ENCODE measurements at regions of chr12 and their contacts with region 1.

Region 1: DNA sequence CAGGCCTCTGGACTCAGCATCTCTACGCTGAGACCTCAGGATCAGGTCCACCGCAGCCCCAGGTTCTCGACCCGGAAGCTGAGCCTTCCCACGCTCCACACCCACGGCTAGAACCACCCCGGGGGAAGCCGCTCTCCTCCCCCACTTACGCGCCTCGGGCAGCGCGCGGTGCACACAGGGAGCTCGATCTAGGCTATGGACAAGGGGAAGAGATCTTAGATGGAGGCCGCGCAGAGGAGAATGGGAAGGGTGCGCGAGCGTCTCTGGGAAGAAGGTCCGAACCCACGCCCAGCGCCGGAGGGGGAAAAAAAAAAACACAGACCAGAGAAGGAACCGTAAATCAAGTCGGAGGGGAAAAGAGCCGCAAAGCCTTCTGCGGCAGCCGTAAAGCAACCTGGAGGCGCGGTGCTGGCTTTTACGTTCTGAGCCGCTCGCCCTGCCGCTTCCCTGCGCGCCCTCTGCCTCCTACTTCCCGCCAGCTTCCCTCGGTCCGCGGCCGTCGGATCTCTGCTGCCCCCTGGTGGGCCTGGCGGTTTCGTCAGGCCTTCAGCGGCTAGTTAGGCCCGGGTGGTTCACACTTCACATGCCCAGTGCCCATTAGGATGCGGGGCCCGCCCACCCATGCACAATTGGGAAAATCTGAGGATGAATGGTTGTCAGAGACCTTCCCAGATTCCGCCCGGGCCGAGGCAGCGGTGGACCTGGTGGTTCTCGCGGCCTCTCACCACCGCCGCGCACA is at the start of gene RAD52:
- DNase-seq: peak; percentile 99 to 100
- ATAC-seq: peak; percentile 99
- H3K4me3 ChIP-seq: peak within 1 kb of the TSS; percentile 66 to 77
- H3K27ac ChIP-seq: peak within 1 kb of the TSS; percentile 47 to 75
- H3K4me1 ChIP-seq: no peaks in the 10 kb centered on the region
- H3K27me3 ChIP-seq: no peaks in the 10 kb centered on the region
- total RNA-seq, gene RAD52: 13.2 to 25.7 TPM

Region 2: GRCh38 chr12:751192-751998 is 198.2 kb before region 1 on chr12:
- intact Hi-C with region 1: loop called in 1 of 2 experiments (anchors 5 kb)
- DNase-seq: peak; percentile 96 to 98
- ATAC-seq: peak; percentile 84
- H3K4me3 ChIP-seq: peak overlapping the region; percentile 13 to 30
- H3K27ac ChIP-seq: peak overlapping the region; percentile 9 to 49
- H3K4me1 ChIP-seq: no peaks in the 10 kb centered on the region
- H3K27me3 ChIP-seq: no peaks in the 10 kb centered on the region

Region 3: GRCh38 chr12:823028-823698 is 126.5 kb before region 1 on chr12:
- intact Hi-C with region 1: loop called in 1 of 2 experiments (anchors 5 kb)
- DNase-seq: no peak
- ATAC-seq: no peak
- H3K4me3 ChIP-seq: no peak overlapping the region
- H3K27ac ChIP-seq: no peak overlapping the region
- H3K4me1 ChIP-seq: peaks cover 0 to 3% of the 10 kb centered on the region in 2 donors
- H3K27me3 ChIP-seq: no peaks in the 10 kb centered on the region

Region 4: DNA sequence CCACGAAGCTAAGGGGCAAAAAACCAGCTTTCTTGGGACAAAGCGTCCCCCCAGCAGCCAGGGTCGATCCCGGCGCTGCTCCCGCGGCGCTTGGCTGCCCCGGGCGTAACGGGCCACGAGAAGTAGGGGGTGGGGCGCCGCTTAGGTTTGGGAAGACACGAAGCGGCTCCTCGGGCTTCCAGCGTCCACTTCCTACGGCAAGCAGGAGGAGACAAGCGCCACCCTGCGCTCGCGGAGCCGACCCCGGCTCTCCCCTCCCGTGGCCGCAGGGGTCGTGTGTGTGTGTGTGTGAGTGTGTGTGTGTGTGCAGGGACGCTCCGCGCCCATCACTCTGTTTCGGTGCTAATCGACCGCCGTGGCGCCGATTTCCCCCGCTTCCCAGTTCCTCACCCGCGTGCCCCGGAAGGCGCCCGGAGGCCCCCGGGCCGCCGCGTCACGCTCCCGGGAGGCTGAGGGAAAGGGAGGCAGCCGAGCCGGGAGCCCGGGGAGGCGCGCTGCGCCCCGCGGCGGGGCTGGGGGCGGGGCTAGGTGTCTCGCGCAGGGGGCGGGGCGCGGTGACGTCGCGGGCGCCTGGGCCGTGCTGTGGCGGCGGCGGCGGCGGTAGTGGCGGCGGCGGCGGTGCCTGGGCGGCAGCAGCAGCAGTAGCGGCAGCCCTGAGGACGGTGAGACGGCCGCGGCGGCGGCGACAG is 41.2 kb after region 1 on chr12 and contains the start of gene ERC1:
- intact Hi-C with region 1: loop called in 1 of 2 experiments (anchors 2 kb)
- DNase-seq: peak; percentile 93 to 96
- ATAC-seq: peak; percentile 96
- H3K4me3 ChIP-seq: peak within 1 kb of the TSS; percentile 75 to 85
- H3K27ac ChIP-seq: peak within 1 kb of the TSS; percentile 20 to 93
- H3K4me1 ChIP-seq: no peaks in the 10 kb centered on the region
- H3K27me3 ChIP-seq: no peaks in the 10 kb centered on the region
- total RNA-seq, gene ERC1: 81.1 to 99.8 TPM

Measured in aorta (tissue), 5 donors.